Sigmoid colon (tissue), 7 donors: ENCODE measurements at regions of chr2 and their contacts with region 1.

Region 1: GRCh38 chr2:64052468-64053241 is 33.4 kb upstream of the VPS54 start:
- DNase-seq: no peak
- H3K4me3 ChIP-seq: no peak overlapping the region
- H3K27ac ChIP-seq: peak overlapping the region in 1 of 4 donors; percentile 14
- H3K4me1 ChIP-seq: no peaks in the 10 kb centered on the region
- H3K27me3 ChIP-seq: no peaks in the 10 kb centered on the region
- CTCF ChIP-seq: no peak
- EP300 ChIP-seq: no peak
- POLR2A ChIP-seq: no peak

Region 2: DNA sequence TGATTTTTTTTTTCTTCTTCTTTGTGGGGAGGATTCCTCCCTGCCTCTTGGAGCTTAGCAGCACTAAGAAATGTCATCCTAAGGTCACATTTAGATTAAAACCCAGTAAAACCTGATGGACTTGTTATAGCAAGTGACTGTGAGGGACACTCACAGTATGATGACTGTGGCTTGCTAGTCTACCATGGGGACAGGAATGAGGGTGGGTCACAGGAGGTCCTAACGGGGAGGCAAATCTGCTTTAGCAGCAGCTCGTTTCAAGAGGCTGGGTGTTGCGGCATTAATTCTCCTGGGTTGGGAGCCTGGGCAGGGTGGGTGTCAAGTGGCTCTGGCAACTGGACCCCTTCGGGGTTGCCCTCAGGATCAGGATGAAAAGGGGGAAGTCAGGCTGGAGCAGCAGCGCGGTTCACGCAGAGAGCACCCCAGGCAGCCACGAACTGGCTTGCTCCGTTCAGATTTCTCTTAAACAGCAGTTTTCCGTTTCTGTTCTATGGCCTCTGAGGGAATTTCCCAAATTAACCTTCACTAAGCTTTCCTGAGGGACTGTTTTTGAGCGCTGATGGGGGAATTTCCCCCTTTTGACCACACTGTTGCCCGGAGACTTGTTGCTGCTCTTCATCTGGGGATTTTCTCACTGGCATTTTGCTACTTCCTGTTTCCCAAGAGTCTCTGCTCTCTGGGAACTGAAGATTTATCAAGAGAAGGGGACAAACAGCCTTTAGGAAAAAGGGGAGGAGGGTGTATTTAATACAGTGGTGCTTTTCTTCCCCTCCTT is 151.4 kb after region 1 on chr2:
- intact Hi-C with region 1: no loop called
- DNase-seq: peak; percentile 73
- H3K4me3 ChIP-seq: peak overlapping the region in 3 of 4 donors; percentile 21 to 28 (median 24)
- H3K27ac ChIP-seq: peak overlapping the region; percentile 84 to 91 (median 87)
- H3K4me1 ChIP-seq: peaks cover 0 to 41% (median 36%) of the 10 kb centered on the region in 4 donors
- H3K27me3 ChIP-seq: no peaks in the 10 kb centered on the region
- CTCF ChIP-seq: no peak
- EP300 ChIP-seq: no peak
- POLR2A ChIP-seq: no peak

Region 3: DNA sequence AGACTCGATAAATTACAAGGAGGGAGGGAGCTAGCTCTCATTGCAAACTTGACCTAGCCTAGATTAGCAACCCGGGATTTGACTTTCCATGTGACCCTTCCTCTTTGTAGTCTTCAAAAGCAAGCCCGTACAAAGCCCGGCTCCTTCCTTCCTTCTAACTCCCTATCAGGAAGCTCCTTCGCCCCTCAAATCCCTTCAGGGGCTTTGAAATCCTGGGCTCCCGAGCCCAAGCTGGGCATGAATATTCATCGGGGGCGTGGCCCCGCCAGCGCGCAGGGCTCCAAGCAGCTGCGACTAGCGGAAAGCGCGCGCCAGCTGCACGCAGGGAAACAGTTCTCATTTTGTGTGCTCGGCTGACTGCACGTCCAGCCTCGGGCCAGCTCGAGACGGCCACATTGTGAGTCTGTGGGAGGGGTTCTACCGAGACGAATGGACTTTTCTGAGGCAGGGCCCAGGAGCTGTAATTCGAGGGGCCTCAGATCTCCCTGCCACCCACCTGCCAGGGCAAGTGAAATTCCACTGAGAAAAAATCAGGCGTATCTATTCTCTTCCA is 175.5 kb after region 1 on chr2:
- intact Hi-C with region 1: loop called (anchors 10 kb)
- DNase-seq: peak; percentile 92
- H3K4me3 ChIP-seq: peak overlapping the region; percentile 15 to 53 (median 45)
- H3K27ac ChIP-seq: peak overlapping the region; percentile 73 to 82 (median 79)
- H3K4me1 ChIP-seq: peaks cover 0 to 42% (median 25%) of the 10 kb centered on the region in 4 donors
- H3K27me3 ChIP-seq: no peaks in the 10 kb centered on the region
- CTCF ChIP-seq: no peak
- EP300 ChIP-seq: no peak
- POLR2A ChIP-seq: no peak

Region 4: DNA sequence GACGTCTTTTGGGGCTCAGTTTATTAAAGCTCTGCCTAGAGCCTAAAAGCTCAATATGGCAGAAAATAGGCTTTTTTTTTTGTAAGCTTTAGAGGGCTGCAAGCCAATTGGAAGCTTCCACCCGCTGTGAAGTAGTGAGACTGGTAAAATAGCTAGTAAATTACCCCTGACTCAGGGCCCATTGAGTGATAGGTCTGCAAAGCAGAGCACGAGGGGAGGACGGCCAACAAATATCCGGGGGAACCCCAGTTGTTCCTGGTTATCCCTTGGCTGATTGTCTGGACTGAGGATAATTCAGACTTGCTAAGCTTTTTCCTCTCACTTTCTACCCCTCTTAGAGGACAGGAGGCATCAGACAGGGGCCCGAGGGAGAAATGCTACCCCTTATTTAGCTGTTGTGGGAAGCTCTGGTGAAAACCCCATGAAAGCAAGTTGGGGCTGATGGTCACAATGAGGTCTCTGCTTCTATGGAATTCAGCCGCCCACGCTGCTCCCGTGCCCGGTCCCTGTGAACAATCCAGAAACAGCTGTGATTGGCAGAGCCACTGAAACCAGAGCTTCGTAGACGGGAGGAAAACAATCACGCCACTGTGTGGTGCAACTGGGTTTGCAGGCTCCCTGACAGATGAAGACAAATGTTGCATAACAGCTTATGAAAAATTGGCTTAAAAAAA is 259.4 kb after region 1 on chr2:
- intact Hi-C with region 1: loop called (anchors 5 kb)
- DNase-seq: peak; percentile 88
- H3K4me3 ChIP-seq: peak overlapping the region in 1 of 4 donors; percentile 6
- H3K27ac ChIP-seq: peak overlapping the region in 3 of 4 donors; percentile 53 to 62 (median 59)
- H3K4me1 ChIP-seq: peaks cover 0 to 21% (median 18%) of the 10 kb centered on the region in 4 donors
- H3K27me3 ChIP-seq: no peaks in the 10 kb centered on the region
- CTCF ChIP-seq: peak in 3 of 4 experiments; percentile 49 to 50 (median 50)
- EP300 ChIP-seq: no peak
- POLR2A ChIP-seq: no peak

Region 5: GRCh38 chr2:64404002-64404731 is 351.5 kb after region 1 on chr2:
- intact Hi-C with region 1: no loop called
- DNase-seq: peak; percentile 90
- H3K4me3 ChIP-seq: no peak overlapping the region
- H3K27ac ChIP-seq: peak overlapping the region; percentile 68 to 75 (median 73)
- H3K4me1 ChIP-seq: peaks cover 0 to 42% (median 23%) of the 10 kb centered on the region in 4 donors
- H3K27me3 ChIP-seq: no peaks in the 10 kb centered on the region
- CTCF ChIP-seq: no peak
- EP300 ChIP-seq: peak in 1 of 4 donors; percentile 11
- POLR2A ChIP-seq: no peak

Region 6: GRCh38 chr2:64488050-64488974 is 435.7 kb after region 1 on chr2:
- intact Hi-C with region 1: loop called (anchors 2 kb)
- DNase-seq: peak; percentile 76
- H3K4me3 ChIP-seq: no peak overlapping the region
- H3K27ac ChIP-seq: no peak overlapping the region
- H3K4me1 ChIP-seq: peaks cover 0 to 21% (median 14%) of the 10 kb centered on the region in 4 donors
- H3K27me3 ChIP-seq: no peaks in the 10 kb centered on the region
- CTCF ChIP-seq: peak; percentile 71 to 94 (median 94)
- EP300 ChIP-seq: no peak
- POLR2A ChIP-seq: no peak